CD8-positive, alpha-beta T cell (primary cell): ENCODE measurements at regions of chr5 and their contacts with region 1.

Region 1: GRCh38 chr5:32092938-32093812 is 80.9 kb downstream of the GOLPH3 start:
- DNase-seq: peak; percentile 25 to 77 (median 65)
- ATAC-seq: peak; percentile 87
- H3K4me3 ChIP-seq: no peak overlapping the region
- H3K4me3 Mint-ChIP-seq: no peak overlapping the region
- H3K27ac ChIP-seq: no peak overlapping the region
- H3K27ac Mint-ChIP-seq: no peak overlapping the region
- H3K4me1 ChIP-seq: no peaks in the 10 kb centered on the region
- H3K4me1 Mint-ChIP-seq: peaks cover 6% of the 10 kb centered on the region
- H3K27me3 ChIP-seq: no peaks in the 10 kb centered on the region
- H3K27me3 Mint-ChIP-seq: no peaks in the 10 kb centered on the region
- CTCF ChIP-seq: peak; percentile 68

Region 2: GRCh38 chr5:31825518-31826068 is 267.6 kb before region 1 on chr5:
- CTCF ChIA-PET with region 1: interaction called, 47 read pairs
- POLR2A ChIA-PET with region 1: no interaction called
- intact Hi-C with region 1: loop called (anchors 1 kb)
- DNase-seq: peak in 6 of 9 experiments; percentile 35 to 69 (median 45)
- ATAC-seq: peak; percentile 70
- H3K4me3 ChIP-seq: no peak overlapping the region
- H3K4me3 Mint-ChIP-seq: peak overlapping the region; percentile 58
- H3K27ac ChIP-seq: no peak overlapping the region
- H3K27ac Mint-ChIP-seq: no peak overlapping the region
- H3K4me1 ChIP-seq: no peaks in the 10 kb centered on the region
- H3K4me1 Mint-ChIP-seq: peaks cover 7% of the 10 kb centered on the region
- H3K27me3 ChIP-seq: no peaks in the 10 kb centered on the region
- H3K27me3 Mint-ChIP-seq: peaks cover 11% of the 10 kb centered on the region
- CTCF ChIP-seq: peak; percentile 54

Region 3: DNA sequence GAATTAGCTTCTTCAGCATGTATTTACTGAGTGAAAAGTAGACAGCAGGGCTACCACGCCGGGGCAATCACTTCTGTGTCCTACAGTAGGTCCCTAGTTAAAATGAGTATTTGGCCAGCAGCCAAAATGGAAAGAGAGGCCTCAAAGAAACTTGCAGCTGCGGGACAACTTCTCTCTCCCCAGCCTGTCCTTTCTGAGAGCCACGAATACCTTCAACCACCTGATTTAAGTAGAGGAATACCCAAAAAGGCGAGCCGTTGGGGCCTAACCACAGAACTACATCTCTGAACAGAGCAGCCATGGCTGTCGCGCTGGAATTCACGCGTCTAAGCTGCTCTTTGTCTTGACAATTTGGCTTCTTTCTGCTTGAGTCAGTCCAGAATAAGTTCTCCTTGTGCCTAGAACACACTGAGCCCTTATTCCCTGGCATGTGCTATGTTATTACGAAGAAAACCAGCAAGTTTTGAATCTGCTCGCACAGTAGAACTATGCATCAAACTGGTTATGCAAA is 124.8 kb after region 1 on chr5:
- CTCF ChIA-PET with region 1: no interaction called
- POLR2A ChIA-PET with region 1: no interaction called
- intact Hi-C with region 1: no loop called
- DNase-seq: no peak
- ATAC-seq: no peak
- H3K4me3 ChIP-seq: no peak overlapping the region
- H3K4me3 Mint-ChIP-seq: no peak overlapping the region
- H3K27ac ChIP-seq: no peak overlapping the region
- H3K27ac Mint-ChIP-seq: no peak overlapping the region
- H3K4me1 ChIP-seq: no peaks in the 10 kb centered on the region
- H3K4me1 Mint-ChIP-seq: no peaks in the 10 kb centered on the region
- H3K27me3 ChIP-seq: no peaks in the 10 kb centered on the region
- H3K27me3 Mint-ChIP-seq: no peaks in the 10 kb centered on the region
- CTCF ChIP-seq: no peak

Region 4: GRCh38 chr5:32369542-32370155 is 276.5 kb after region 1 on chr5:
- CTCF ChIA-PET with region 1: no interaction called
- POLR2A ChIA-PET with region 1: no interaction called
- intact Hi-C with region 1: no loop called
- DNase-seq: no peak
- ATAC-seq: no peak
- H3K4me3 ChIP-seq: no peak overlapping the region
- H3K4me3 Mint-ChIP-seq: no peak overlapping the region
- H3K27ac ChIP-seq: no peak overlapping the region
- H3K27ac Mint-ChIP-seq: no peak overlapping the region
- H3K4me1 ChIP-seq: no peaks in the 10 kb centered on the region
- H3K4me1 Mint-ChIP-seq: no peaks in the 10 kb centered on the region
- H3K27me3 ChIP-seq: no peaks in the 10 kb centered on the region
- H3K27me3 Mint-ChIP-seq: no peaks in the 10 kb centered on the region
- CTCF ChIP-seq: no peak